Heart left ventricle (tissue), 16 donors: ENCODE measurements at regions of chrX and their contacts with region 1.

Region 1: GRCh38 chrX:136214551-136214950 is 36.6 kb downstream of the MAP7D3 start:
- DNase-seq: no peak
- ATAC-seq: no peak
- H3K4me3 ChIP-seq: no peak overlapping the region
- H3K27ac ChIP-seq: peak overlapping the region in 2 of 12 donors; percentile 29 to 44
- H3K4me1 ChIP-seq: peaks cover 0 to 22% (median 0%) of the 10 kb centered on the region in 12 donors
- H3K27me3 ChIP-seq: peaks cover 0 to 11% (median 0%) of the 10 kb centered on the region in 9 donors
- CTCF ChIP-seq: no peak
- POLR2A ChIP-seq: no peak

Region 2: GRCh38 chrX:135477576-135477975 is 737.0 kb before region 1 on chrX:
- intact Hi-C with region 1: no loop called
- DNase-seq: peak; percentile 57 to 85 (median 74)
- ATAC-seq: peak; percentile 55 to 86 (median 72)
- H3K4me3 ChIP-seq: no peak overlapping the region
- H3K27ac ChIP-seq: no peak overlapping the region
- H3K4me1 ChIP-seq: peaks cover 0 to 3% (median 0%) of the 10 kb centered on the region in 12 donors
- H3K27me3 ChIP-seq: peaks cover 0 to 6% (median 0%) of the 10 kb centered on the region in 9 donors
- CTCF ChIP-seq: peak in 9 of 12 donors; percentile 17 to 51 (median 31)
- POLR2A ChIP-seq: no peak

Region 3: GRCh38 chrX:136251041-136251991 is 36.8 kb after region 1 on chrX and contains the start of gene MAP7D3:
- intact Hi-C with region 1: loop called in 1 of 10 experiments (anchors 5 kb)
- DNase-seq: peak; percentile 63 to 86 (median 74)
- ATAC-seq: peak; percentile 64 to 95 (median 92)
- H3K4me3 ChIP-seq: peak within 1 kb of the TSS; percentile 54 to 87 (median 76)
- H3K27ac ChIP-seq: peak within 1 kb of the TSS in 11 of 12 donors; percentile 57 to 87 (median 81)
- H3K4me1 ChIP-seq: peaks cover 0 to 15% (median 0%) of the 10 kb centered on the region in 12 donors
- H3K27me3 ChIP-seq: peaks cover 0 to 20% (median 0%) of the 10 kb centered on the region in 9 donors
- CTCF ChIP-seq: no peak
- POLR2A ChIP-seq: peak in 1 of 2 donors; percentile 41
- total RNA-seq, gene MAP7D3: 8.2 to 18.4 (median 13.2) TPM

Region 4: GRCh38 chrX:136405126-136405525 is 190.6 kb after region 1 on chrX:
- intact Hi-C with region 1: no loop called
- DNase-seq: no peak
- ATAC-seq: no peak
- H3K4me3 ChIP-seq: no peak overlapping the region
- H3K27ac ChIP-seq: no peak overlapping the region
- H3K4me1 ChIP-seq: no peaks in the 10 kb centered on the region
- H3K27me3 ChIP-seq: peaks cover 0 to 18% (median 0%) of the 10 kb centered on the region in 9 donors
- CTCF ChIP-seq: no peak
- POLR2A ChIP-seq: no peak

Region 5: DNA sequence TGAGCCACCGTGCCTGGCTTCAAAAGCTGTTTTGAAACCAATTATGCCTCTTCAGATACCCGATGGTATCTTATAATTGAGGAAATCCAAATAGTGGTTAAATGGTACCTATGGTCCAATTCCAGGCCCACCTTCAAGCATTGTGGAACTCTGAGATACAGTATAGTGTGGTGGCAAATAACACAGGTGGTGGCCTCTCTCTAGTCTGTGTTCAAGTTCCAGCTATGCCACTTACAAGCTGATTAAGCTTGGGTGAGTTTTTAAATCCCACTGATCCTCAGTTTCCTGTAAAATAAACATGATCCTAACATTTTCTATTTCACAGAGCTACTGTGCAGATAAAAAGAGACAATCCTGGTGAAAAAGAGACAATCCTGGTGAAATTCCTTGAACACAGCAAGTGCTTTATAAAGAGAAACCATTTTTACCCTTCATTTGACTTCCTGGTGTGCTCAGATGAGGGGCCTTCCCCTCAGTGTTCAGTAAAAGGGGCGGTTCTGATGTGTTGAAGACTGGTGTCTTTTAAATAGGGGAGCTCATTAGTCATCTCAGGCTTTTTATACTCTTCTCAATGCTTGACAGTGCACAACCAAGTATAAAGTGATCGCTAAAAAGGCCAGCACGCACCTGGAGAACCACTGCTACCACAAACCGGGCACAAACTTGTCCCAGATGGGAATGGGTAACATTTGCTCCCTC is 402.6 kb after region 1 on chrX:
- intact Hi-C with region 1: no loop called
- DNase-seq: no peak
- ATAC-seq: no peak
- H3K4me3 ChIP-seq: no peak overlapping the region
- H3K27ac ChIP-seq: no peak overlapping the region
- H3K4me1 ChIP-seq: no peaks in the 10 kb centered on the region
- H3K27me3 ChIP-seq: no peaks in the 10 kb centered on the region
- CTCF ChIP-seq: no peak
- POLR2A ChIP-seq: no peak